ENCODE measurements at regions of chr16 and their contacts with region 1.

Region 1: GRCh38 chr16:27449434-27450195 is 47.6 kb downstream of the IL21R start:
- DNase-seq: peak; percentile 97
- ATAC-seq: peak; percentile 74
- H3K4me3 Mint-ChIP-seq: peak overlapping the region; percentile 53
- H3K27ac Mint-ChIP-seq: peak overlapping the region; percentile 97
- H3K4me1 Mint-ChIP-seq: peaks cover 93% of the 10 kb centered on the region
- H3K27me3 Mint-ChIP-seq: no peaks in the 10 kb centered on the region
- CTCF ChIP-seq: no peak

Region 2: GRCh38 chr16:27374804-27375425 is 74.7 kb before region 1 on chr16:
- CTCF ChIA-PET with region 1: interaction called, 5 read pairs
- POLR2A ChIA-PET with region 1: interaction called, 6 read pairs
- intact Hi-C with region 1: loop called (anchors 5 kb)
- DNase-seq: peak; percentile 73
- ATAC-seq: peak; percentile 47
- H3K4me3 Mint-ChIP-seq: no peak overlapping the region
- H3K27ac Mint-ChIP-seq: no peak overlapping the region
- H3K4me1 Mint-ChIP-seq: peaks cover 41% of the 10 kb centered on the region
- H3K27me3 Mint-ChIP-seq: no peaks in the 10 kb centered on the region
- CTCF ChIP-seq: peak; percentile 47

Region 3: GRCh38 chr16:27401768-27402568 is 47.6 kb before region 1 on chr16 and contains the start of gene IL21R:
- CTCF ChIA-PET with region 1: interaction called, 9 read pairs
- POLR2A ChIA-PET with region 1: interaction called, 129 read pairs
- intact Hi-C with region 1: no loop called
- DNase-seq: peak; percentile 95
- ATAC-seq: peak; percentile 74
- H3K4me3 Mint-ChIP-seq: peak within 1 kb of the TSS; percentile 99
- H3K27ac Mint-ChIP-seq: peak within 1 kb of the TSS; percentile 96
- H3K4me1 Mint-ChIP-seq: peaks cover 37% of the 10 kb centered on the region
- H3K27me3 Mint-ChIP-seq: no peaks in the 10 kb centered on the region
- CTCF ChIP-seq: no peak
- total RNA-seq, gene IL21R: 95.6 to 97.2 TPM

Region 4: DNA sequence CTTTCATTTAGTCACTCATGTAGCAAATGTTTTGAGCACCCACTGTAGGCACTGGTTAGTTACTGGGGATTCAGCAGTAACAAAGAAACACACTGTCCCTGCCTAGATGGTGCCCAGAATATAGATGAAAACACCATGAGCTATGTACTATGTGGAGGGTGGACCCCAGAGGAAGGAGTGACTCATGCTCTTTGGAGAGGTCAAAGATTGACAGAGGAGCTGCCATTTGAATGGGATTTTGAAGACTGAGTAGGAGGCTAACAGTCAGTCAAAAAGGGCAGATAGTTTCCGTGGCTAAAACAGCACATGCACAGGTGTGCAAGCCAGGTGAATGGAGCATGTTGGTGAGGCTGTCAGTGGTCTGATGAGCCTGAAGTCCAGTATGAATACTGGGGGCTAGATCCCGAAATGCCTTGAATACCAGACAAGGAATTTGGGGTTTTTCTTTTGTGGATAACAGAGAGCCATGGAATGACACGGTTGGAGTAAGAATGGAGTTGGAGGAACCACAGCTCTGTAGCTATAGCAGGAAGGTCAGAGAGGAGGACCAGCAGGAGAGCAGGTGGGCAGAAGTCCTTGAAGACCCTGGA is 41.5 kb before region 1 on chr16:
- CTCF ChIA-PET with region 1: interaction called, 9 read pairs
- POLR2A ChIA-PET with region 1: interaction called, 129 read pairs
- intact Hi-C with region 1: loop called (anchors 2 kb)
- DNase-seq: peak; percentile 86
- ATAC-seq: peak; percentile 72
- H3K4me3 Mint-ChIP-seq: peak overlapping the region; percentile 99
- H3K27ac Mint-ChIP-seq: peak overlapping the region; percentile 96
- H3K4me1 Mint-ChIP-seq: peaks cover 65% of the 10 kb centered on the region
- H3K27me3 Mint-ChIP-seq: no peaks in the 10 kb centered on the region
- CTCF ChIP-seq: no peak

Region 5: DNA sequence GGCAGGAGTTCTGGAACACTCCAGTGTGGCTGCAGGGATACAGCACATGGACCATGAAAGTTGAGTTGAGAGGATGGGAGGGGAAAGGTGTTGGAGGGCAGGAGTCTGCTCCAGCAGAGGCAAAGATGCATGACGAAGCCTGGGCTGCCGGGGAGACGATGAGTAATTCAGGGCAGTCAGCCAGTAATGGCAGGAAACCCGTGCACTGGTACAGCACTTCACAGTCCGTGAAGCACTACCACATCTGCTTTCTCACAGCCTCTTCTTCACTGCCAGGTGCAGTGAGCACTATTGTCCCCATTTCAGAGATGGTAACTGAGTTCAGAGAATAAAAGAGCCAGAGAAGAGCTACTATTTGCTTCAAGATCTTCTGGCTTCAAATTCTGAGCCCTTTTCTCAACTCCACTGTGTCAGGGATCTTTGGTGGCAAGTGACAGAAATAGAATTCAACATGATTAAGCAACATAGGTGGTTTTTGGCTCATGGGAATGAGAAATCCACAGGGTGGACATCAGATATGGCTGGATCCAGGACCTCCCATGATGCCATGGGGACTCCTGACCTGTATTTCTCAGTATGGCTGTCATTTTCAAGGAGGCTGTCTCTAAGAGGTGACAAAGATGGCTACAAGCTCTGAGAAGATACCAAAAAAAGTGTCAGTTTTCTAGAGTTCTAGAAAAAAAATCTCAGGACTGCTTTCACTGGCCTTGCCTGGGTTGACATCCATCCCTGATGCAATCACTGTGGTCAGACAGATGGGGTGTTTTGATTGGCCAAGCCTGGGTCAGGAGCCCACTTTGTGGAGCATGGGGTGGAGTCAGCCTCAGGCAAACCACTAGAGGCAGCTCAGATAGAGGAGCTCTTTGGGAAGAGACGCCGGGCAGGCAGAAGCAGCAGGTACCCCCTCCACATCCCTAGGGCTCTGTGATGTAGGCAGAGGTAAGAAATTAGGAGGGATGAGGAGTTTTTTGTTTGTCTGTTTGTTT is 22.9 kb before region 1 on chr16:
- CTCF ChIA-PET with region 1: interaction called, 3 read pairs
- POLR2A ChIA-PET with region 1: interaction called, 85 read pairs
- intact Hi-C with region 1: no loop called
- DNase-seq: peak; percentile 90
- ATAC-seq: peak; percentile 90
- H3K4me3 Mint-ChIP-seq: peak overlapping the region; percentile 64
- H3K27ac Mint-ChIP-seq: peak overlapping the region; percentile 92
- H3K4me1 Mint-ChIP-seq: peaks cover 84% of the 10 kb centered on the region
- H3K27me3 Mint-ChIP-seq: no peaks in the 10 kb centered on the region
- CTCF ChIP-seq: no peak

Region 6: GRCh38 chr16:27439273-27440018 is 10.2 kb before region 1 on chr16:
- CTCF ChIA-PET with region 1: interaction called, 3 read pairs
- POLR2A ChIA-PET with region 1: interaction called, 85 read pairs
- intact Hi-C with region 1: no loop called
- DNase-seq: peak; percentile 0
- ATAC-seq: no peak
- H3K4me3 Mint-ChIP-seq: no peak overlapping the region
- H3K27ac Mint-ChIP-seq: no peak overlapping the region
- H3K4me1 Mint-ChIP-seq: peaks cover 22% of the 10 kb centered on the region
- H3K27me3 Mint-ChIP-seq: no peaks in the 10 kb centered on the region
- CTCF ChIP-seq: no peak

Region 7: DNA sequence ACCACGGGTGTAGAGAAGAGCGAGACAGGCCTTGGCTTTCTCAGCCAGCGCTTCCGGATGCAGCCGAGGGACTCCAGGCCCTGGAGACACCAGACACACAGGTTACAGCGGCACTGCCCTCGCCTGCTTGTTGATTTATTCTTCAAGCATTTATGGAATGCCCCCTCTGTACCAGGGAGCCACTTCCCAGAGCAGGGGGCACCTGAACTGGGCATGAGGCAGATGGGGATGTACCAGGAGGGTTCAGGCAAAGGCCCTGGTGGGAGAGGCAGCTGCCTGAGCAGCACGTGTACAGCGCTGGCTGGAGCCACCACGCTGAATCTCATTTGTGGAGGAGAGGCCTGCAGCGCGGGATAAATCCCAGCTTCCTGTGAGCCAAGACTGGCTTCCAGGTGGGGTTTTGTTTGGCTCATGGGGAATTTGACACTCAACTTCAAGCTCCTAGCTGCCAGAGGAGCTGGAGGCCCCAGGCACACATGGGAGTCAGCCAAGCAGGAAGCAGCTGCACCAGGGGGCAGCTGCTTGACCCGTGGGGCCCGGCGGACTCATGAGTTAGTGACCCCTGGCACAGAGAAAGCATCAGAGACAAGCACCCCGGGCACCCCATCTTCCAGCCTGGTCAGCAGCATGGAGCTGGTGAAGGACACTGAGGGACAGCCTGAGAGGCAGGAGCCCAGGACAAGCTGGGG is 12.0 kb after region 1 on chr16:
- CTCF ChIA-PET with region 1: interaction called, 3 read pairs
- POLR2A ChIA-PET with region 1: interaction called, 37 read pairs
- intact Hi-C with region 1: no loop called
- DNase-seq: no peak
- ATAC-seq: no peak
- H3K4me3 Mint-ChIP-seq: no peak overlapping the region
- H3K27ac Mint-ChIP-seq: no peak overlapping the region
- H3K4me1 Mint-ChIP-seq: peaks cover 62% of the 10 kb centered on the region
- H3K27me3 Mint-ChIP-seq: no peaks in the 10 kb centered on the region
- CTCF ChIP-seq: no peak

Region 8: GRCh38 chr16:27566417-27566816 is 116.8 kb after region 1 on chr16:
- CTCF ChIA-PET with region 1: no interaction called
- POLR2A ChIA-PET with region 1: no interaction called
- intact Hi-C with region 1: no loop called
- DNase-seq: no peak
- ATAC-seq: no peak
- H3K4me3 Mint-ChIP-seq: no peak overlapping the region
- H3K27ac Mint-ChIP-seq: no peak overlapping the region
- H3K4me1 Mint-ChIP-seq: no peaks in the 10 kb centered on the region
- H3K27me3 Mint-ChIP-seq: no peaks in the 10 kb centered on the region
- CTCF ChIP-seq: no peak

Region 9: GRCh38 chr16:27611340-27611739 is 161.7 kb after region 1 on chr16:
- CTCF ChIA-PET with region 1: no interaction called
- POLR2A ChIA-PET with region 1: no interaction called
- intact Hi-C with region 1: no loop called
- DNase-seq: no peak
- ATAC-seq: no peak
- H3K4me3 Mint-ChIP-seq: no peak overlapping the region
- H3K27ac Mint-ChIP-seq: no peak overlapping the region
- H3K4me1 Mint-ChIP-seq: no peaks in the 10 kb centered on the region
- H3K27me3 Mint-ChIP-seq: no peaks in the 10 kb centered on the region
- CTCF ChIP-seq: no peak